AG04450 (cell line): ENCODE measurements at regions of chr2 and their contacts with region 1.

Region 1: DNA sequence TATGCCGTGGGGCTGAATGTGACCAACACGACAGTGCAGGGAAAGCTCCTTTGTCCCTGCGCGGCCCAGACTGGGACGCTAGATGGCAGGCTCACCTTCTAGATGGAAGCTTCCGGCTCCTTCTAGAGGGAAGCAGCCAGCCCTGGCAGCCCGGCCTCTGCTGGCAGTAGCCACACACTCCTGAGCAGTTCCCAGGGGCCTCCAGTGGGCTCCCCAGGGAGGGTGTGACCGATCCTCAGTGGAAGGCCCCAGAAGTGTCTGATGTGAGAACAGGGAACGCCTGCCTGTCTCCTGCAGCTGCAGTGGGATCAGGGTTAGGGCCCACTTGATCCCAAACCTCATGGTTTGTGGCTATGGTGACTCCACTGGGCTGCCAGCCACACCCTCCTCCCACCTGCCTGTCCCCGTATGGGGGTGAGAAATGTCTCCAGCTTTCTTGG is 48.5 kb upstream of the LRPPRC start:
- DNase-seq: peak; percentile 47
- H3K4me3 ChIP-seq: no peak overlapping the region
- H3K27ac ChIP-seq: no peak overlapping the region
- H3K27me3 ChIP-seq: peaks cover 26% of the 10 kb centered on the region
- CTCF ChIP-seq: peak; percentile 97

Region 2: GRCh38 chr2:43810452-43810851 is 233.8 kb before region 1 on chr2:
- CTCF ChIA-PET with region 1: no interaction called
- POLR2A ChIA-PET with region 1: no interaction called
- DNase-seq: no peak
- H3K4me3 ChIP-seq: no peak overlapping the region
- H3K27ac ChIP-seq: no peak overlapping the region
- H3K27me3 ChIP-seq: no peaks in the 10 kb centered on the region
- CTCF ChIP-seq: no peak

Region 3: GRCh38 chr2:43939695-43940256 is 104.5 kb before region 1 on chr2:
- CTCF ChIA-PET with region 1: no interaction called
- POLR2A ChIA-PET with region 1: no interaction called
- DNase-seq: no peak
- H3K4me3 ChIP-seq: no peak overlapping the region
- H3K27ac ChIP-seq: no peak overlapping the region
- H3K27me3 ChIP-seq: no peaks in the 10 kb centered on the region
- CTCF ChIP-seq: no peak

Region 4: GRCh38 chr2:44170311-44170717 is 126.0 kb after region 1 on chr2:
- CTCF ChIA-PET with region 1: interaction called, 10 read pairs
- POLR2A ChIA-PET with region 1: no interaction called
- DNase-seq: no peak
- H3K4me3 ChIP-seq: peak overlapping the region; percentile 90
- H3K27ac ChIP-seq: no peak overlapping the region
- H3K27me3 ChIP-seq: no peaks in the 10 kb centered on the region
- CTCF ChIP-seq: no peak

Region 5: DNA sequence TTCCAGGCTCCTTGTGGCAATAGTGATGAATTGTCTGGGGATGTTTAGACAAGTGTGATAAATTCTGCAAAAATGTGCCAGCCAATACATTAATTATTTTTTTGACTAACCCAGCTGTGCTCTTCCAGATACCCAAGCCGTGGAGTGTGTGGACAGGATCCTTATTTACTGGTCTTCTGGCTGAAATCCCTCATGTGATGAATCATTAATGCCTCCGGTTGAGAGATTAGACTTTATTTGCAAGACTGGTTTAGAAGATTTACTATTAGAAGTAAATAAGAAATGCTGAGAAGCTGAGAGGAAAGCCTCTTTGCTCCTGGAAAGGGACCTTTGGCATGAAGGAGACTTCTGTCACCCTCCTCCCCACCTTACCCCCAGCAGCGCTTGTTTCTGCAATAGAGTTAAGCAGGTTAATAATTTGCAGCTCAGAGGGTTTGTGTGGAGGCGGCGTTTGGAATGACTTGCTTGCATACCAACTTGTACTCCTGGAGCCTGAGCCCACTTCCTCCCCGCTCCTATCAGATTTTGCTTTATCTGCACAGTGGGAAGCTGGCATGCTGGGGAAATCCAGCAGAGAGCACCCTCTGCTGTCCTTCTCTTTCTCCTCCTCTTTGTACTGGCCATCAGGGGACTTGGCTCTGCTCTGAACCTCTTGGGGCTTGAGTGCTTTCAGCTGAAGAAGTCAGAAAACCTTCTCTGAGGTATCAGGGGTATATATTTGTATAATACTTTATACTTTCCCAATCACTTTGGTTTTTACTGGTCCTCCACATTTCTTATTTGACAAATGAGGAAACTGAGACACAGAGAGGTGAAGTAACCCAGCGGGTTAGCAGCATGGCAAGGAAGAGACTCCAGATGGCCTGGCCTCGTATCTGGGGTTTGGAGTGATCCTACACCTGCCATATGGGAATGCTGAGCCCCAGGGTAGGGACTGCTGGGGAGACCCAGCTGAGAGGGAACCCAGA is 247.3 kb after region 1 on chr2:
- CTCF ChIA-PET with region 1: interaction called, 16 read pairs
- POLR2A ChIA-PET with region 1: interaction called, 3 read pairs
- DNase-seq: peak; percentile 41
- H3K4me3 ChIP-seq: no peak overlapping the region; the same call in 1 of the 2 replicates
- H3K27ac ChIP-seq: peak overlapping the region; percentile 24
- H3K27me3 ChIP-seq: peaks cover 15% of the 10 kb centered on the region
- CTCF ChIP-seq: peak; percentile 77

Region 6: DNA sequence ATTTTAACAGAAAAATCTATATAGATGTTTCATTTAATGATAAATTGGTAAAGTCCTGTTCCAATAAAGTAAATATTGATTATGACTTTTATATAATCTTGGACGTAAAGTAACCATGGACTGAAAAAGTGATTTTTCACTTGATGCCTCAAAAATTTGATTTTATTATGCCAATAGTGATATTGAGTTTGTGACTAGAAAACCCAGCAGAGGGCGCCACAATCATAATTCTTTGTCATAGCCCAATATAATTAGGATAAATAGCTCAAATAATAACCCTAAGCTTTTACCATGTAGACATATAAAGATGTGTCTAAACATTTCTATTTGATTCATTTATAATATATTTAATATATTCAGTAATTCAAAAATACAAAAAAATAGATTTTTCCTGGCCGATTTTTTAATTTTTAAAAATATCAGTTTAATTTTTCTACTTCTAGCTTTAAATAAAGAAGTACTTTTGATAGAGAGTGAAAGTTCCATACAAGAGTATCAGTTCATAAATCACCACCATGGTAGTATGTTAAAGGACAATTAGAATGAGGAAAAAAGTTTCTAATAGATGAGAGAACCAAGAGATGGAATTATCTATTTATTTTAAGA is 348.1 kb after region 1 on chr2:
- CTCF ChIA-PET with region 1: interaction called, 29 read pairs
- POLR2A ChIA-PET with region 1: no interaction called
- DNase-seq: no peak
- H3K4me3 ChIP-seq: no peak overlapping the region
- H3K27ac ChIP-seq: no peak overlapping the region
- H3K27me3 ChIP-seq: no peaks in the 10 kb centered on the region
- CTCF ChIP-seq: peak; percentile 68

Region 7: DNA sequence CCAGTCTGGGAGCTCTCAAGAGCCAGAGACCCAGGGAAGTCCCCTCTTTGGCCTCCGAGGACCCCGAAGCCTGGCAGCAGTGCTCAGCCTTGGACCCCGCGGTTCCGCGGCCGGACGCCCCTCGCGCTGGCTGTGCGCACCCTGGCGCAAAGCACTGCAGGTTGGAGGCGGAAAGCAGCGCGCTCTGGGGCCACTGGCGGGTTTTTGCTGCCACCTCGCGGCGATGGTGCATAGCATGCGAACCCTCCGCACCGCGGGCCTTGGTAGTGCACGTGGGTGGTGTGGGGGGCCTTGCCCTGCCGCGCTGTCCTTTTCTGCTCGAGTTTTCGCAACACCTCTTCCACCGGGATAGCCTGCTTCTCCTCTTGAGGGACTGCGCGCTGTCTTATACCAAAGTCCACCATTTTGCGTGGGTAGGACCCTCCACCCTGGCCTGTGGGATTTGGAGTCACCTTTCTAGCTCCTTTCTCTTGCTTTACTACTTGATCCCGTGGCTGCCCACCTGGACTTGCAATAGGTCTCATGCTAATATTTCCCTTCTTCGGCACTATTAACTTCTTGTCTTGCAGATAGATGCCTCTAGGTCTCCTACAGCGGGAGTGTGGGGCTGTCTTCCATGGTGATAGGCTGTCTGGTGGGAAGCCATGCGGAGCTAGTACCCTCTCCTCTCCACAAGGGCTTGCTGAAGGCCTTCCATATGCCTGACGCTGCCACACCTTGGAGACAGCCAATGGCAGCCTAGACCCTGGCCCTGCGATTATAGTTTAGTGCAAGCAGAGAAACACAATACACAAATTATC is 911.5 kb after region 1 on chr2:
- CTCF ChIA-PET with region 1: interaction called, 15 read pairs
- POLR2A ChIA-PET with region 1: no interaction called
- DNase-seq: peak; percentile 18
- H3K4me3 ChIP-seq: 0 out of 2 replicates have a peak overlapping the region, but pooled peaks have one; percentile 4
- H3K27ac ChIP-seq: no peak overlapping the region
- H3K27me3 ChIP-seq: peaks cover 53% of the 10 kb centered on the region
- CTCF ChIP-seq: peak; percentile 85